Activated naive CD4-positive, alpha-beta T cell treated with anti-CD3 and anti-CD28 coated beads, Interleukin-2, amount 10 ng/mL, durations not matched to agents 7 days and 5 days (primary cell): ENCODE measurements at regions of chr3 and their contacts with region 1.

Region 1: GRCh38 chr3:129490242-129491045 is 38.0 kb upstream of the RHO start:
- DNase-seq: peak; percentile 69
- H3K4me3 Mint-ChIP-seq: no peak overlapping the region
- H3K27ac Mint-ChIP-seq: no peak overlapping the region
- H3K4me1 Mint-ChIP-seq: no peaks in the 10 kb centered on the region
- H3K27me3 Mint-ChIP-seq: no peaks in the 10 kb centered on the region

Region 2: DNA sequence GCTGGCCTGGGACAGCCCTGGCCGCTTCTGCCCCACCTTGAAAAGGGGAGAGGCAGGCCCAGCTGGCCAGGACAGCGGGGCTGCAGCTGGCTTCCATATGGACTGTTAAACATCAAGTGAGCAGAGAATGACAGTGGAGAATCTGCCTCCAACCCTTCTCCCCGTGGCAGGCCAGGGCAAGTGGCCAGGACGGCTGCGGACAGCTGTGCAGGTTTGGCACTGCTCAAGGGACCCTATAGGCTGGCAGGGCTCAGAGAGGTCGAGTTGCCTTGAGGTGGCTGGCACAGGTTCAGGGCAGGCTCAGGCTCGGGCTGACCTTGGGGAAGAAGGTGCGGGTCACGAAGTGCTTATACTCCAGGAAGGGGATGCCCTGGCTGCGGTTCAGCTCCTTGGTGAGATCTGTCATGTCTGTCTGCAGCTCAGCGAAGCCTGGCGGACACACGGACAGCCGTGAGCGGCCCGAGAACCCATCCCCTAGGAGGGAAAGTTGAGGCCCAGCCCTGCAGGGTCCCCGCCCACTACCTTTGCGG is 76.8 kb after region 1 on chr3:
- CTCF ChIA-PET with region 1: no interaction called
- DNase-seq: no peak
- H3K4me3 Mint-ChIP-seq: no peak overlapping the region
- H3K27ac Mint-ChIP-seq: no peak overlapping the region
- H3K4me1 Mint-ChIP-seq: no peaks in the 10 kb centered on the region
- H3K27me3 Mint-ChIP-seq: peaks cover 4% of the 10 kb centered on the region

Region 3: DNA sequence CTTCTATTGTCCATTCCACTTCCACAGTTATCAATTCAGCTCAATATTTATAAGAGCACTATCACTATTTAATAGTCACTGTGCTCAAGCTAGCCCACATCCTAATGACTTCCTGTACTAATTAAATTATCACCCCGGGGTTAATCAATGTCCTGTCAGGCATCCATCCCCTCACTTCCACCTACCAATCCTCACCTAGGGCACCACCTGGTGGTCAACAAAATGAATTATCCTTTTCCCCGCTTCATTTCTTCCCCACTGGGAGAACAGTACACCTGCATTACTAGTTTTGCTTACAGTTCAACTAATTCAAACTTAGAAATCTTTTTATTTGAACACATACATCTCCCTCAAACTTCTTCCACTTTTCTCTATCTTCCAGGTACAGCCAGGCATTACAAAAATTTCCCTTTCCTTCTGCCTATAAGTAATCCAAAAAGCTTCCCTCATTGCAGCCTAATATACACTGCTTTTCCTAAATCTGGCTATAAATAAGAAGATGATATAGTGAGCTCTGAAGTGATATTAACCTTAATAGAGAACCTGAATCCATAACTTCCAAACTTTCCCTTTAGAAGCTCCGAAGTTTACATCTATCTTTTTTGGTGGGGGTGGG is 334.6 kb after region 1 on chr3:
- CTCF ChIA-PET with region 1: interaction called, 39 read pairs
- DNase-seq: peak; percentile 52
- H3K4me3 Mint-ChIP-seq: no peak overlapping the region
- H3K27ac Mint-ChIP-seq: no peak overlapping the region
- H3K4me1 Mint-ChIP-seq: peaks cover 16% of the 10 kb centered on the region
- H3K27me3 Mint-ChIP-seq: no peaks in the 10 kb centered on the region